ENCODE measurements at regions of chr10 and their contacts with region 1.

Region 1: DNA sequence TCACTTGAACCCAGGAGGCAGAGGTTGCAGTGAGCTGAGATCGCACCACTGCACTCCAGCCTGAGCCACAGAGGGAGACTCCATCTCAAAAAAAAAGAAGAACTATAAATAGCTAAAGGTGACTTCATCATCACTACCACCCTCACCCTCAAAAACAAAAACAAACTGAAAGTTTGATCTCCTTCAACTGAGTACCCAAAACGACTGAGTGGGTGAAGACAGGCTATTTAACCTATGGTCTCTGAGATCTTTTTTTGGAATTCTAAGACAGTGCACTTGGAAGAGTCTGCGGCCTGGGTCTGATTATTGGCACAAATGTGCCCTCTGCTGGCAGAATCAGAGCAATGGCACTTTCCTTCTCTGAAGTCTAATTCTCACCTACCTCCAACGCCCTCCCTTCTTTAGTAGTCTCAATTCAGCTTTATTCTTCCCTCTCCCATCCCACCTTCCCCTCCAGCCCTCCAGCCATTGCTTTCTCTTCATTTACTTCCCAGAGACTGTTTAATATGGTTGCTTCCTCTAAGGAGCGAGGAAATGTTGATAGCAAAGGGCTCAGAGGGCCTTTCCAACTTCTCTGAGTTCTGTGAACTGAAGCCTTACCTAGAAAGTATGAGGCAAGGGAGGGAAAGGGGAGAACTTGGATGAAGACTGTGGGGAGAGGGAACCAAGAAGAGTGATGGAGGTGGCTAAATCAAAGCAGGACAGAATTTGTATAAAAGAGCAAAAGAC is 2.9 kb upstream of the MYOZ1 start:
- DNase-seq: peak in 7 of 10 donors; percentile 55 to 94 (median 61)

Region 2: DNA sequence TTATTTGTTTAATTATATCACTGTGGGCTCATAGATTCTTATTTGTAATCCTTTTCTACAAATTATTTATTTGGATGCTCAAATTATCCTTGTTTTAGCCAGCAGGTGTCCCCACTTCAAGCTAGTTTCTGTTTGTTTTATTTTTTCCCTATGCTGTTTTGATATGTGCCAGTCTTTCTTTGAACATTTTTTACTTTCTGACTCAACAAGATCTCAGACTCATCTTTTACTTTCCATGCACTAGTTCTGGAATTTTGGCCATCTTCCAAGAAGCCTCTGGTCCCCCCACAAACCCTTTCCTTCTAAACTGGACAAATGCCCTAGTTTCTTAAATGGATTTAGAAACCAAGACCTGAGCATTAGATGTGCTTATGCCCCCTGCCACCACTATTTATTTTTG is 380.2 kb before region 1 on chr10:
- intact Hi-C with region 1: loop called (anchors 5 kb)
- DNase-seq: no peak

Region 3: DNA sequence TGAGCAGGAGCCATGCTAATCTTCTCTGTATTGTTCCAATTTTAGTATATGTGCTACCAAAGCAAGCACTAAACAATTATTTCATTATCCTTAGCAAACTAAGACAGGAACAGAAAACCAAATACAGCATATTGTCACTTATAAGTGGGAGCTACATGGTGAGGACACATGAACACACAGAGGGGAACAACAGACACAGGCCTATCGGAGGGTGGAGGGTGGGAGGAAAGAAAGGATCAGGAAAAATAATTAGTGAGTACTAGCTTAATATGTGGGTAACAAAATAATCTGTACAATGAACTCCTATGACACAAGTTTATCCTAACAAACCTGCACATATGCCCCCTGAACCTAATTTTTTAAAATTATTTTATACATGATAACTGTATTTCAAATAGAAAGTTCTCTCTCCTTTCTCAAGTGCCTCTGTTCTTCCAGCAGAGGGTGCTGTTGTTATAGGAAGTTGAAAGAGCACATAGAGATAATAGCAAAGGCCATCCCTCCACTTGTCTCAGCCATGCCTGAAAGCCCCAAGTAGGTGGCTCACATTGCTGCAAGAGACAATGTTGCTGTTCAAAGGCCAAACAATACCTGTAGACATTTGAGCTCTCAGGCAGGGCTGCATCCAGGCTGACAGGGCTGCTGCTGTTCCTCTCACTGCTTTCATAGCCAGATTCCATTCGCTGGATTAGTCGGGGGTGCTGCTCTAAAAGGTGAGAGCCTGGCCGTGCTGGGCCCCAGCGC is 114.9 kb before region 1 on chr10:
- intact Hi-C with region 1: loop called (anchors 1 kb)
- DNase-seq: peak in 3 of 10 donors; percentile 16 to 44 (median 18)